ENCODE measurements at regions of chr18 and their contacts with region 1.

Region 1: GRCh38 chr18:40450751-40451150 is 1504.3 kb upstream of the PIK3C3 start:
- DNase-seq: no peak
- ATAC-seq: no peak
- H3K4me3 ChIP-seq: no peak overlapping the region
- H3K27ac ChIP-seq: no peak overlapping the region
- H3K4me1 ChIP-seq: no peaks in the 10 kb centered on the region
- H3K27me3 ChIP-seq: no peaks in the 10 kb centered on the region
- CTCF ChIP-seq: no peak

Region 2: GRCh38 chr18:40473221-40474029 is 22.7 kb after region 1 on chr18:
- CTCF ChIA-PET with region 1: no interaction called
- POLR2A ChIA-PET with region 1: interaction called, 12 read pairs
- intact Hi-C with region 1: no loop called
- DNase-seq: no peak
- ATAC-seq: no peak
- H3K4me3 ChIP-seq: no peak overlapping the region
- H3K27ac ChIP-seq: no peak overlapping the region
- H3K4me1 ChIP-seq: no peaks in the 10 kb centered on the region
- H3K27me3 ChIP-seq: no peaks in the 10 kb centered on the region
- CTCF ChIP-seq: no peak